Calu3 (cell line): ENCODE measurements at regions of chr6 and their contacts with region 1.

Region 1: DNA sequence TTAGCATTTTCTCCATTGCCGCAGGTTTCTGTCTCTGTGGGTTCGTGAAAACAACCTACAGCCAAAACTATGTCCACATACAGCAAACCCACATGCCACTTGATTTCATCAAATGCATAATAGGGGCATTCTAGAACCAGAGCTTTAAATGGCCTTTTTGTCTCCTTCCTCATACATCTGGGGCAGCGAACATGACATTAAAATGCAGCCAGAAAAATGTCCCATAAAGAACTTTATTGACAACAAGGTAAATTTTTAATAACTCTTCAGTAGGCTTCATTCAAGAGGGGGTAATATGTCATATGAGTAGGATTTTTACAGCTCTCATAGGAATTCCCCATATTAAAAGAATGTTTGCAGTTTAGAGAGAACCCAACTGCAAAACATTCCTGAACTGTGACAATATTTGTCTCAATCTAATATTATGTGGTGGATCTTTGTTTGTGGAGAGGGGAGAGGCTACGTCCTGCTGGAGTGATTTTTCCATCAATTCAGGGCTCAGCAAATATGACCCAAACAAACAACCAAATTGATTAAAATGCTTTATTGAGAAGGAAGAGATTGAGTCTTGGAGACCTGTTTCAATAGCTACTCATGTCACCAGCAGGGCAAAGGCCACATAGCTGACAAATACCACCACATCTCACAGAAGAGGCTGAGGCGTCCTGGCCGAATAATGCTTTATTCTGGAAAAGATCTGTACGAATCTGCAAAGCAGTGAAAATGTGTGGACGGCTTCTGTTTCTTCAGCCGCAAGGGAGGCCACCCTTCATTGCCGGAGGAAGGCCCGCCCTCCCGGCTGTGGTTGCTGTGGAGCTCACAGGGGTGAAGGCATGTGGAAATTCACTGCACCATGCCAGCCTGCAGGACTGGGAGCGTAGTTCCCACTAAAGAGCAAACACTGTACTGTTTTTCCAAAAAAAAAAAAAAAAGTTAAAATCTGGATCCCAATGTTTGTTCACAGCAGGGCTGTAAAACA is 89.8 kb upstream of the QKI start:
- DNase-seq: peak; percentile 79
- H3K4me3 Mint-ChIP-seq: peak overlapping the region; percentile 63
- H3K27ac Mint-ChIP-seq: peak overlapping the region; percentile 93
- H3K4me1 Mint-ChIP-seq: peaks cover 62% of the 10 kb centered on the region
- H3K27me3 Mint-ChIP-seq: no peaks in the 10 kb centered on the region
- CTCF ChIP-seq: no peak

Region 2: GRCh38 chr6:163180874-163181541 is 143.7 kb before region 1 on chr6:
- CTCF ChIA-PET with region 1: interaction called, 3 read pairs
- intact Hi-C with region 1: loop called (anchors 2 kb)
- DNase-seq: peak; percentile 84
- H3K4me3 Mint-ChIP-seq: no peak overlapping the region
- H3K27ac Mint-ChIP-seq: peak overlapping the region; percentile 97
- H3K4me1 Mint-ChIP-seq: peaks cover 23% of the 10 kb centered on the region
- H3K27me3 Mint-ChIP-seq: no peaks in the 10 kb centered on the region
- CTCF ChIP-seq: peak; percentile 74

Region 3: DNA sequence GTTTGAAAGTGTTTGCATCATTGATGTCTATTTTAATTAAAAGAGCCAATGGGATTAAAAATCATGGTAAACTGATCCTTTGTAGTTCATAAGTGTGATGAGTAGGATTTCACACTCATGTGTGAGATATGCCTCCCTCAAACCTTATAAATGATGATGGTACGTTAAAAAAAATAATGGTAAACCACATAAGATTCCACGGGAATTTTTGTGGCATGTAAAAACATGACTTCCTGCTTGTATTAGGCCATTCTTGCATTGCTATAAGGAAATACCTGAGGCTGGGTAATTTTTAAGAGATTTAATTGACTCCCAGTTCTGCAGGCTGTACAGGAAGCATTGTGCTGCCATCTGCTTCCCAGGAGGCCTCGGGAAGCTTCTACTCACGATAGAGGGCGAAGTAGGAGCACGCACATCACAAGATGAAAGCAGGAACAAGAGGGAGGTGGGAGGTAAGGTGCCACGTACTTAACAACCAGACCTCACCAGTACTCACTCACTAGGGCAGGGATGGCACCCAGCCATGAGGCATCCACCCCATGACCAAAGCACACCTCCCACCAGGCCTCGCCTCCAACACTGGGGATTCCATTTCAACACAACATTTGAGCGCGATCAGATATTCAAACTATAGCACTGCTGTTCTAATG is 97.7 kb before region 1 on chr6:
- CTCF ChIA-PET with region 1: no interaction called
- intact Hi-C with region 1: no loop called
- DNase-seq: no peak
- H3K4me3 Mint-ChIP-seq: no peak overlapping the region
- H3K27ac Mint-ChIP-seq: no peak overlapping the region
- H3K4me1 Mint-ChIP-seq: peaks cover 41% of the 10 kb centered on the region
- H3K27me3 Mint-ChIP-seq: no peaks in the 10 kb centered on the region
- CTCF ChIP-seq: no peak

Region 4: GRCh38 chr6:163309491-163310026 is 15.1 kb before region 1 on chr6:
- CTCF ChIA-PET with region 1: interaction called, 7 read pairs
- intact Hi-C with region 1: loop called (anchors 2 kb)
- DNase-seq: peak; percentile 37
- H3K4me3 Mint-ChIP-seq: peak overlapping the region; percentile 12
- H3K27ac Mint-ChIP-seq: peak overlapping the region; percentile 91
- H3K4me1 Mint-ChIP-seq: peaks cover 34% of the 10 kb centered on the region
- H3K27me3 Mint-ChIP-seq: no peaks in the 10 kb centered on the region
- CTCF ChIP-seq: no peak

Region 5: DNA sequence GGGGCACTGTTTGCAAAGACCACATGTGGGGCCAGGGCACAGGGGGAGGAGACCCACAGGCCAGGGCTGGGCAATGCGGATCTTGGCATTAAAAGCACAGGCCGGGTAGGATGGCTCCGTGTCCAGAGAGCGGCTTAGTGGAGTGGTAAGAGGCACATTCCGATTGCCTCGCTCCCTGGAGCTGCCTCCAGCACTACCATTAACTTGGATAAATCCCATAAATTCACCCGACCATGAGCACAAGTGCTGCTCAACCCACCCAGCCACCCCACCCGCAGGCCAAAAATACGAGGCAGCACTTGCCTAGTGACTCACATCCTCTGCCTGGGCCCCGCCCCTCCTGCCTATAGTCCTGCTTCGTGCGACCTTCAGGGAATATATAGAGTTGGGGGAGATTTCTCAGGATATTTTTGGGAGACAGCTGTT is 22.3 kb after region 1 on chr6:
- CTCF ChIA-PET with region 1: no interaction called
- intact Hi-C with region 1: no loop called
- DNase-seq: no peak
- H3K4me3 Mint-ChIP-seq: no peak overlapping the region
- H3K27ac Mint-ChIP-seq: no peak overlapping the region
- H3K4me1 Mint-ChIP-seq: no peaks in the 10 kb centered on the region
- H3K27me3 Mint-ChIP-seq: no peaks in the 10 kb centered on the region
- CTCF ChIP-seq: no peak

Region 6: DNA sequence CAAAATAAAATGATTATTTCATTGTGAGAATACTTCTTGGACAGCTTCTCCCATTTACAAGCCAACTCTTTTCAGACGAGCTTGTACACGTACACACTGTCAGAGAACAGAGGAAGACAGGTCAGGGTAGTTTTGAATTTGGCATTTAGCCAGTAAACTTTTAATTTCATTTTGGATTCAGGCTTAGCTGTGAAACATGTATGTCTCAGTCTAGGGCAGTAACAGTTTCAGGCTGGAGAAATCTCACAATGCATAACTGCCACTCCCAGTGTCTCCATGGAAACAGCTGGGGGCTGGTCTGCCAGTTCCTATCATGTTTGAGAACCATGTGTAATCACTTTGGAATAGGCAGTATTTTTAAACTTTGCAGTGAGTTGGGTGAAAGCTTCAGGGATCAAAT is 67.8 kb after region 1 on chr6:
- CTCF ChIA-PET with region 1: interaction called, 7 read pairs
- intact Hi-C with region 1: loop called (anchors 1 kb)
- DNase-seq: peak; percentile 69
- H3K4me3 Mint-ChIP-seq: peak overlapping the region; percentile 60
- H3K27ac Mint-ChIP-seq: peak overlapping the region; percentile 75
- H3K4me1 Mint-ChIP-seq: peaks cover 29% of the 10 kb centered on the region
- H3K27me3 Mint-ChIP-seq: no peaks in the 10 kb centered on the region
- CTCF ChIP-seq: no peak

Region 7: GRCh38 chr6:163474581-163474980 is 149.9 kb after region 1 on chr6:
- CTCF ChIA-PET with region 1: no interaction called
- intact Hi-C with region 1: no loop called
- DNase-seq: no peak
- H3K4me3 Mint-ChIP-seq: no peak overlapping the region
- H3K27ac Mint-ChIP-seq: no peak overlapping the region
- H3K4me1 Mint-ChIP-seq: peaks cover 39% of the 10 kb centered on the region
- H3K27me3 Mint-ChIP-seq: no peaks in the 10 kb centered on the region
- CTCF ChIP-seq: no peak